GM12878 (cell line): ENCODE measurements at regions of chr9 and their contacts with region 1.

Region 1: GRCh38 chr9:130023144-130023787 is 19.7 kb downstream of the FNBP1 start:
- DNase-seq: peak; percentile 88
- ATAC-seq: peak; percentile 47
- H3K4me3 ChIP-seq: peak overlapping the region; percentile 59
- H3K27ac ChIP-seq: peak overlapping the region; percentile 83
- H3K4me1 ChIP-seq: peaks cover 92% of the 10 kb centered on the region
- H3K27me3 ChIP-seq: no peaks in the 10 kb centered on the region
- CTCF ChIP-seq: no peak
- EP300 ChIP-seq: peak; percentile 9 to 85; a peak in 2 of 4 replicates
- POLR2A ChIP-seq: peak; percentile 58
- RAD21 ChIP-seq: no peak

Region 2: GRCh38 chr9:130010151-130010988 is 12.9 kb before region 1 on chr9:
- CTCF ChIA-PET with region 1: interaction called, 5 read pairs
- POLR2A ChIA-PET with region 1: interaction called, 68 read pairs
- RAD21 ChIA-PET with region 1: interaction called, 88 read pairs
- SMC1A ChIA-PET with region 1: interaction called, 763 read pairs
- in situ Hi-C with region 1: no loop called
- intact Hi-C with region 1: no loop called
- DNase-seq: no peak
- ATAC-seq: peak; percentile 59
- H3K4me3 ChIP-seq: peak overlapping the region; percentile 42; the same call in 1 of the 2 replicates
- H3K27ac ChIP-seq: peak overlapping the region; percentile 99
- H3K4me1 ChIP-seq: peaks cover 77% of the 10 kb centered on the region
- H3K27me3 ChIP-seq: no peaks in the 10 kb centered on the region
- CTCF ChIP-seq: no peak
- EP300 ChIP-seq: peak; percentile 77 to 95
- POLR2A ChIP-seq: peak; percentile 61
- RAD21 ChIP-seq: no peak

Region 3: GRCh38 chr9:130034570-130034969 is 11.3 kb after region 1 on chr9:
- CTCF ChIA-PET with region 1: interaction called, 20 read pairs
- POLR2A ChIA-PET with region 1: interaction called, 220 read pairs
- RAD21 ChIA-PET with region 1: interaction called, 160 read pairs
- SMC1A ChIA-PET with region 1: interaction called, 73 read pairs
- in situ Hi-C with region 1: no loop called
- intact Hi-C with region 1: no loop called
- DNase-seq: no peak
- ATAC-seq: peak; percentile 3
- H3K4me3 ChIP-seq: peak overlapping the region; percentile 61
- H3K27ac ChIP-seq: peak overlapping the region; percentile 83
- H3K4me1 ChIP-seq: peaks cover 52% of the 10 kb centered on the region
- H3K27me3 ChIP-seq: no peaks in the 10 kb centered on the region
- CTCF ChIP-seq: no peak
- EP300 ChIP-seq: no peak
- POLR2A ChIP-seq: no peak
- RAD21 ChIP-seq: no peak